Natural killer cell (primary cell): ENCODE measurements at regions of chr9 and their contacts with region 1.

Region 1: DNA sequence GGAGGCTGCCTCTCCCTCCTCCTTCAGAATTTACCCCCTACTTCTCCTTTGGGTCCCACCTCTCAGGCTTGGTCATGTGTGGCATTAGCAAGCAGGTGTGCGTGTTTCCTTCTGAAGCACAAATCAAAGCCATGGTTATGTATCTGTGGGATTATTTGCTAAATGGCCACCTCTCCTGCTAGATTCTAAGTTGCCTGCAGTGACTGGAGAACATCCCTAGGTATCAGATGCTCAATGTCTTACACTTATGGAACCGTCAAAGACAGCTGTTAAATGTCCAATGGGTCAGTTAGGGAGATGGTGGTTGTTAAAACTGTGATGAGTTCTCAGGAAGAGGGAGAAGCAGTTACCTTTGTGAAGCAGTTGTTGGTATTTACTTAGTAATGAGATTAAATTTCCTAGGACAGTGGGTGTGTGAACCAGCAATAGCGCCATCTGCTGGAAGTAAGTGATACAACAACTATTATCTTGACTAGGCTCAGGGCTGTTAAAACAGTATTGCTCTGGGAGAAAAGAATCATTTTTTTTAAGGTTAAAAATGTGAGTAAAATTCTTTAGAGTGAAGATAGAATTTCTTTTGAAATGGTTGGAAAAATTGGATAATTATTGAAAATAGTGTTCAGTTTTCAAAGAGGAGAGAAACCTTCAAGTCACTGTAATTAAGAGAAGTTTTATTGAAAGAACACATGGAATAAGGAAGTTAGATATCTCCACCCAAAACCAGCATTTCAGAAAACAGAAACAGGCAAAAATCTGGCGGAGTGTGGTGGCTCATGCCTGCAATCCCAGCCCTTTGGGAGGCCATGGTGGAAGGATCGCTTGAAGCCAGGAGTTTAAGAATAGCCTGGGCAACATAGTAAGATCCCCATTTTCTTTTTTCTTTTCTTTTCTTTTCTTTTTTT is 71.3 kb downstream of the TMC1 start:
- DNase-seq: peak in 1 of 2 donors; percentile 80
- ATAC-seq: peak; percentile 78 to 82 (median 81)
- H3K4me3 ChIP-seq: no peak overlapping the region
- H3K4me3 Mint-ChIP-seq: no peak overlapping the region
- H3K27ac ChIP-seq: no peak overlapping the region
- H3K27ac Mint-ChIP-seq: no peak overlapping the region
- H3K4me1 ChIP-seq: no peaks in the 10 kb centered on the region
- H3K4me1 Mint-ChIP-seq: peaks cover 0 to 5% of the 10 kb centered on the region in 2 donors
- H3K27me3 ChIP-seq: peaks cover 2% of the 10 kb centered on the region
- H3K27me3 Mint-ChIP-seq: peaks cover 7 to 24% of the 10 kb centered on the region in 2 donors
- CTCF ChIP-seq: peak; percentile 84

Region 2: DNA sequence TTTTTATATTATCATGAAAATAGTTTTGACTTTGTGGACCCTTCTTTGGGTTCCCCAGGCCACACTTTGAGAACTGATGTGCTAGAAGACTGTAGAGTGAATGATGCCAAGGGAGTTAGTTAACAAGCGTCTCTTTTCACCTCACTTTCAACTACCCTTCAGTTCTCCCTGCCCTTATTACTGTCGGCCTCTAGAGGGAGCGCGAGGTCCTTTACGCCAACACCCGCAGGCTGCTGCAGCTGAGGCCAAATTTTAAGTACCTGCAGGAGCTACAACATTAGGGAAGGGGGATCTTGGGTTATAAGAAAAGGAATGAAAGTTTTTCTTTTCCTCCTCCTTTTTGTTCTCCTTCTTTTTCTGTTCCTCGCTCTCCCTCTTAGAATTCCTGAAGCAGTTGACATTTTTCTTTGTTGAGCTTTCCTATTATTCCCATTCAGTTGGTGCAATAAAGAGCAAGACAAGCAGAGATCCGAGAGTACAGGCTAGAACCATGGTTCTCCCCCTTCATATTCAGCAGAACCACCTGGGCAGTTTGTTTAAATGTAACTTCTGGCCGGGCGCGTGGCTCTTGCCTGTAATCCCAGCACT is 311.7 kb before region 1 on chr9:
- intact Hi-C with region 1: loop called (anchors 1 kb)
- DNase-seq: peak; percentile 66 to 87
- ATAC-seq: peak; percentile 87 to 99 (median 99)
- H3K4me3 ChIP-seq: no peak overlapping the region
- H3K4me3 Mint-ChIP-seq: no peak overlapping the region
- H3K27ac ChIP-seq: no peak overlapping the region
- H3K27ac Mint-ChIP-seq: no peak overlapping the region
- H3K4me1 ChIP-seq: no peaks in the 10 kb centered on the region
- H3K4me1 Mint-ChIP-seq: no peaks in the 10 kb centered on the region
- H3K27me3 ChIP-seq: no peaks in the 10 kb centered on the region
- H3K27me3 Mint-ChIP-seq: peaks cover 0 to 2% of the 10 kb centered on the region in 2 donors
- CTCF ChIP-seq: peak; percentile 98

Region 3: GRCh38 chr9:72292256-72292682 is 300.5 kb before region 1 on chr9:
- intact Hi-C with region 1: loop called (anchors 1 kb)
- DNase-seq: peak in 1 of 2 donors; percentile 56
- ATAC-seq: peak in 2 of 3 donors; percentile 49 to 50
- H3K4me3 ChIP-seq: no peak overlapping the region
- H3K4me3 Mint-ChIP-seq: no peak overlapping the region
- H3K27ac ChIP-seq: no peak overlapping the region
- H3K27ac Mint-ChIP-seq: no peak overlapping the region
- H3K4me1 ChIP-seq: no peaks in the 10 kb centered on the region
- H3K4me1 Mint-ChIP-seq: peaks cover 6% of the 10 kb centered on the region in 2 donors
- H3K27me3 ChIP-seq: no peaks in the 10 kb centered on the region
- H3K27me3 Mint-ChIP-seq: peaks cover 0 to 7% of the 10 kb centered on the region in 2 donors
- CTCF ChIP-seq: peak; percentile 75

Region 4: DNA sequence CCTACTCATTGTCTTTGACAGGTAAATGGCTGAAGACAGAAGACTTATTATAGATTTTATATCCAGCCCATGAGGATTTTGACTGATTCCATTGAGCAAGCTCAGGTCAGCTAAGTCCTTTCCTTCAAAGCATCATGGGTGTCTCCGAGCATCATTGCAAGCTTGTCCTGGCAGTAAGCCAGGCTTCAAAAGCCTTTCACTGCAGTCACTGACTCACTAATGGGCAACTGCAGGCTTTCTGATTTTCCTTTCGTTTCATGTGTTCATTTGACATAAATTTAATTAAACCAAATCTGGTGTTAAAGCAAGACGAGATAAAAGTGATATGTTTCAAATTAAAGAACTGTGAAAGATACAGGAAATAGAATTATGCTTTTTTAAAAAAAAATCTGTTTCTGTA is 985.1 kb after region 1 on chr9:
- intact Hi-C with region 1: no loop called
- DNase-seq: no peak
- ATAC-seq: no peak
- H3K4me3 ChIP-seq: no peak overlapping the region
- H3K4me3 Mint-ChIP-seq: no peak overlapping the region
- H3K27ac ChIP-seq: no peak overlapping the region
- H3K27ac Mint-ChIP-seq: no peak overlapping the region
- H3K4me1 ChIP-seq: no peaks in the 10 kb centered on the region
- H3K4me1 Mint-ChIP-seq: no peaks in the 10 kb centered on the region
- H3K27me3 ChIP-seq: no peaks in the 10 kb centered on the region
- H3K27me3 Mint-ChIP-seq: no peaks in the 10 kb centered on the region
- CTCF ChIP-seq: no peak